ENCODE measurements at regions of chr6 and their contacts with region 1.

Region 1: GRCh38 chr6:139515511-139515910 is 141.1 kb upstream of the CITED2 start:
- DNase-seq: no peak
- H3K4me3 Mint-ChIP-seq: no peak overlapping the region
- H3K27ac Mint-ChIP-seq: peak overlapping the region; percentile 76
- H3K4me1 Mint-ChIP-seq: peaks cover 32% of the 10 kb centered on the region
- H3K27me3 Mint-ChIP-seq: no peaks in the 10 kb centered on the region

Region 2: GRCh38 chr6:139452176-139452876 is 63.2 kb before region 1 on chr6:
- CTCF ChIA-PET with region 1: no interaction called
- POLR2A ChIA-PET with region 1: no interaction called
- intact Hi-C with region 1: no loop called
- DNase-seq: no peak
- H3K4me3 Mint-ChIP-seq: no peak overlapping the region
- H3K27ac Mint-ChIP-seq: no peak overlapping the region
- H3K4me1 Mint-ChIP-seq: peaks cover 2% of the 10 kb centered on the region
- H3K27me3 Mint-ChIP-seq: no peaks in the 10 kb centered on the region

Region 3: DNA sequence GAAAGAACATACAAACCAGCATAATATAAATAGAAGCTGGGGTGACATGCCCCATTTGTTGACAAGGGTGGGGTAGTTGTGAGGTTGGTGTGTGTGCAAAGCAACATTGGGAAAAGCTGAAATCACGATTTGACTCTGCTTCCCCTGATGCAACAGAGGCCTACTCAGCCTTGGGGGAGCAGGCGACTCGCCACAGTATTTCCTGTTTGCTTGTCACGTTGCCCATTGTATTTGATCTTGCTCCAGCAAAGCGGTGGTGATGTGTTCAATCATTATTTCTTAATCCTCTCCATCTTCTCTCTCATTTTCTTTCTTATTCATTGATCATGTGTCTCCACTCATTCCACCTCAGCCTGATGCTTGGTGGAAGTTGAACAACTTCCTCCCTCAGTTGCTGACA is 24.8 kb after region 1 on chr6:
- CTCF ChIA-PET with region 1: no interaction called
- POLR2A ChIA-PET with region 1: interaction called, 8 read pairs
- intact Hi-C with region 1: loop called (anchors 1 kb)
- DNase-seq: peak; percentile 82
- H3K4me3 Mint-ChIP-seq: peak overlapping the region; percentile 38
- H3K27ac Mint-ChIP-seq: peak overlapping the region; percentile 84
- H3K4me1 Mint-ChIP-seq: peaks cover 44% of the 10 kb centered on the region
- H3K27me3 Mint-ChIP-seq: no peaks in the 10 kb centered on the region

Measured in activated CD4-positive, alpha-beta memory T cell treated with anti-CD3 and anti-CD28 coated beads for 36 hours (primary cell).